PC-9 (cell line): ENCODE measurements at regions of chr2 and their contacts with region 1.

Region 1: DNA sequence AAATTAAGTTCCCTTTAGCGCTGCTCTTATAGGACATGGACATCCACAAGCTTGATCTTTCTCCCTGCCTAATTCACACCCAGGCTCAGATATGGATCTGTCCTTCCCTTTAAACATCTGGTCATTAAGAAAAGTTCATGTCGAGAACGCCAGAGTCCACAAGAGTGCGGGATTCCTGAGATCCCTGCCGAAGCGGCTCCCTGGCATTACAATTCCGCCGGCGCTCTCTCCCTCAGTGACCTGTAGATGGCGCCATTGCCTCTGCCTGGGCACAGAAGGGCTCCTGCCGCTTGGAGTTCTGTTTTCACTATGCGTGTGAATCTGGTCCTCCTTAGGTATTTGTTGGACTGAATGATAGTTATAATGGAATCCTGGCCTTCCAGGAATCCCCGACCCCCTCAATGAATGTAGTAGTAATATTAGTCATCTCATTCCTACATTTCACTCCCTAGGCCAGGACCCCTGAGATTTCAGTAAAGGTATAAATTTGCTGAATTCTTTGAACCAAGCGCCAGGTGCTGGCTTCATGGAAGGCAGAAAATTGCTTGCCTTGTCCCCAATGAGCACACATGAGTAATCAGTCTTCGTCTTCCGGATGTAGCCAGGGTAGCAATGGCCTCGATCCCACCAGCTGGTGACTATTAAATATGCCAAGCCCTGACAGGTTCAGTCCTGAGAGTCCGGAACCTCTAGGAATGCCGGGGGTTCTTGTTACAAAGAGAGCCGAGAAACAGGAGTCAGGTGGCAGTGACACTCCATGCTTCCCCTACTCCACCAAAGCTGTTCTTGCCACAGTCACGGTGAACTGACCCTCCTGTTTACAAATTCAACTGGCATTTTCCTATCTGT is 26.4 kb upstream of the CD207 start:
- DNase-seq: peak; percentile 59 to 86
- H3K4me3 ChIP-seq: no peak overlapping the region
- H3K27ac ChIP-seq: no peak overlapping the region
- H3K4me1 ChIP-seq: no peaks in the 10 kb centered on the region
- H3K27me3 ChIP-seq: peaks cover 30% of the 10 kb centered on the region
- CTCF ChIP-seq: peak; percentile 93

Region 2: GRCh38 chr2:70656421-70657010 is 205.5 kb before region 1 on chr2:
- CTCF ChIA-PET with region 1: no interaction called
- POLR2A ChIA-PET with region 1: no interaction called
- intact Hi-C with region 1: loop called (anchors 5 kb)
- DNase-seq: no peak
- H3K4me3 ChIP-seq: no peak overlapping the region
- H3K27ac ChIP-seq: no peak overlapping the region
- H3K4me1 ChIP-seq: no peaks in the 10 kb centered on the region
- H3K27me3 ChIP-seq: peaks cover 47% of the 10 kb centered on the region
- CTCF ChIP-seq: no peak

Region 3: GRCh38 chr2:71000780-71001591 is 139.0 kb after region 1 on chr2:
- CTCF ChIA-PET with region 1: no interaction called
- POLR2A ChIA-PET with region 1: no interaction called
- intact Hi-C with region 1: loop called (anchors 2 kb)
- DNase-seq: peak in 1 of 2 experiments; percentile 60
- H3K4me3 ChIP-seq: peak overlapping the region; percentile 52
- H3K27ac ChIP-seq: no peak overlapping the region
- H3K4me1 ChIP-seq: peaks cover 6% of the 10 kb centered on the region
- H3K27me3 ChIP-seq: no peaks in the 10 kb centered on the region
- CTCF ChIP-seq: peak; percentile 93

Region 4: DNA sequence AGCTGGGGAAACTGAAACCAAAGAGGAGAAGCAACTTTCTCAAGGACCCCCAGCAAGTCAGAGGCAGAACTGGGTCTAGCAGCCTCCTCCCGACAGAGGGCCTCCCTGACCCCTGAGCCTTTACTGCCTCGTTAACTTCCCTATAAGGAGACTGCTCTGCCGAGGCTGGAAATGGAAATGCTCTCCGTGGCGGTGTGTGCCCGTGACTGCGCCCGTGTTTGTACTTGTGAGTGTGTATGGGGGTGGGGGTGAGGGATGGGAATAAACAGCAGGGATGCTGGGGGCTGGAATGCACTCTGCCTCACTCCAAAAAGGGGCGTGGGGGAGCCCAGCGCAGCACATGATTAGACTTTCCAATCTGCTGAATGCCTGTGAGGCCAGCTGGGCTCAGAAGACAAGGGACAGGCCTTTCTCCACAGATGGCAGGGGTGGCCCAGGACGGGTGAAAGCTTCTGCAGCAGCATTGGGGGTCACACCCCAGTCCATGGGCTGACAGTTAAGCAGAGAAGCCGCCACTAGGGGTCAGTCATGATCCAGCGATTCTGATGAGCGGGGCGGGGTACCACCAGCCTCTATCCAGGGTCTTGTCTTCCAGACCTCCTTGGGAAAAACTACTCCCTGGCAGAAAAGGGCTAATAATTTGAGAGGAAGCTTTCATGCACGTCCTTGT is 295.3 kb after region 1 on chr2:
- CTCF ChIA-PET with region 1: no interaction called
- POLR2A ChIA-PET with region 1: no interaction called
- intact Hi-C with region 1: loop called (anchors 10 kb)
- DNase-seq: peak in 1 of 2 experiments; percentile 34
- H3K4me3 ChIP-seq: no peak overlapping the region
- H3K27ac ChIP-seq: no peak overlapping the region
- H3K4me1 ChIP-seq: no peaks in the 10 kb centered on the region
- H3K27me3 ChIP-seq: no peaks in the 10 kb centered on the region
- CTCF ChIP-seq: peak; percentile 75